Activated CD4-positive, alpha-beta memory T cell treated with anti-CD3 and anti-CD28 coated beads for 36 hours (primary cell): ENCODE measurements at regions of chr4 and their contacts with region 1.

Region 1: GRCh38 chr4:74874753-74875367 is 58.1 kb upstream of the PARM1 start:
- DNase-seq: no peak
- H3K4me3 Mint-ChIP-seq: no peak overlapping the region
- H3K27ac Mint-ChIP-seq: no peak overlapping the region
- H3K4me1 Mint-ChIP-seq: no peaks in the 10 kb centered on the region
- H3K27me3 Mint-ChIP-seq: peaks cover 3% of the 10 kb centered on the region

Region 2: GRCh38 chr4:74858929-74859562 is 15.8 kb before region 1 on chr4:
- CTCF ChIA-PET with region 1: interaction called, 10 read pairs
- POLR2A ChIA-PET with region 1: no interaction called
- intact Hi-C with region 1: no loop called
- DNase-seq: no peak
- H3K4me3 Mint-ChIP-seq: no peak overlapping the region
- H3K27ac Mint-ChIP-seq: no peak overlapping the region
- H3K4me1 Mint-ChIP-seq: no peaks in the 10 kb centered on the region
- H3K27me3 Mint-ChIP-seq: peaks cover 9% of the 10 kb centered on the region

Region 3: DNA sequence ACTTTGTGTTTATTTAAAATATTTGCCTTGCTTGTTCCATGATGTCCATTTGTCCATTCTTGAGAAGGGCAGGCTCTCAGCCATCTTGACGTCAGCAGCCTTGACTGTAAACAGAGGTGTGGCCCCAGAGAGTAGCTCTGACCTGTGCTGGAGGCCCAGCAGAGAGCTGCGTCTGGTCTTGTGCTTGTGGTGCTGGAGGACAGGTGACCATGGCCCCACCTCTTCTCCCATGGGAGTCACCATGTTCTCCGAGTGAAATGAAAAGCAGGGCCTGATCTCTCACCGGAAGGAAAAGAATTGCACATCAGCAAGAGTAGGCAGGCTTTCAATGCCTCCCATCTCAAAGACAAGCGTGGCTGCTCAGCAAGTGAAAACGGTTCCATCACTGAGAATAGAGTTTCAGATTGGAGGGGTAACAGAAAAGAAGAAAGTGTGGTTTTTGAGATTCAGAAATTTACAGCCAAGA is 69.5 kb after region 1 on chr4:
- CTCF ChIA-PET with region 1: interaction called, 12 read pairs
- POLR2A ChIA-PET with region 1: no interaction called
- intact Hi-C with region 1: no loop called
- DNase-seq: no peak
- H3K4me3 Mint-ChIP-seq: no peak overlapping the region
- H3K27ac Mint-ChIP-seq: no peak overlapping the region
- H3K4me1 Mint-ChIP-seq: no peaks in the 10 kb centered on the region
- H3K27me3 Mint-ChIP-seq: peaks cover 5% of the 10 kb centered on the region